ENCODE measurements at regions of chr4 and their contacts with region 1.

Region 1: GRCh38 chr4:8468746-8469535 is 28.4 kb downstream of the TRMT44 start:
- DNase-seq: peak in 1 of 2 donors; percentile 82
- H3K4me3 ChIP-seq: no peak overlapping the region
- H3K27ac ChIP-seq: no peak overlapping the region
- H3K4me1 ChIP-seq: peaks cover 0 to 23% (median 19%) of the 10 kb centered on the region in 4 donors
- H3K27me3 ChIP-seq: no peaks in the 10 kb centered on the region
- CTCF ChIP-seq: peak; percentile 82 to 90

Region 2: GRCh38 chr4:7506119-7506518 is 962.8 kb before region 1 on chr4:
- intact Hi-C with region 1: no loop called
- DNase-seq: no peak
- H3K4me3 ChIP-seq: no peak overlapping the region
- H3K27ac ChIP-seq: no peak overlapping the region
- H3K4me1 ChIP-seq: peaks cover 0 to 24% (median 8%) of the 10 kb centered on the region in 4 donors
- H3K27me3 ChIP-seq: no peaks in the 10 kb centered on the region
- CTCF ChIP-seq: no peak

Region 3: GRCh38 chr4:7861440-7861881 is 607.5 kb before region 1 on chr4:
- intact Hi-C with region 1: no loop called
- DNase-seq: no peak
- H3K4me3 ChIP-seq: no peak overlapping the region
- H3K27ac ChIP-seq: no peak overlapping the region
- H3K4me1 ChIP-seq: peaks cover 0 to 35% (median 17%) of the 10 kb centered on the region in 4 donors
- H3K27me3 ChIP-seq: no peaks in the 10 kb centered on the region
- CTCF ChIP-seq: no peak

Region 4: GRCh38 chr4:8594097-8595038 is 125.4 kb after region 1 on chr4:
- intact Hi-C with region 1: loop called (anchors 2 kb)
- DNase-seq: peak in 1 of 2 donors; percentile 35
- H3K4me3 ChIP-seq: no peak overlapping the region
- H3K27ac ChIP-seq: no peak overlapping the region
- H3K4me1 ChIP-seq: peaks cover 0 to 17% (median 6%) of the 10 kb centered on the region in 4 donors
- H3K27me3 ChIP-seq: peaks cover 0 to 48% of the 10 kb centered on the region in 2 donors
- CTCF ChIP-seq: peak; percentile 54 to 59

Region 5: GRCh38 chr4:8795774-8796495 is 327.0 kb after region 1 on chr4:
- intact Hi-C with region 1: no loop called
- DNase-seq: no peak
- H3K4me3 ChIP-seq: no peak overlapping the region
- H3K27ac ChIP-seq: no peak overlapping the region
- H3K4me1 ChIP-seq: no peaks in the 10 kb centered on the region
- H3K27me3 ChIP-seq: peaks cover 0 to 6% of the 10 kb centered on the region in 2 donors
- CTCF ChIP-seq: no peak

Measured in tibial artery (tissue), 4 donors.